Activated T-helper 2 cell treated with anti-CD3 and anti-CD28 coated beads, Interferon-gamma antibody, Interleukin-2, Interleukin-4, amounts not matched to agents 10 μg/mL and 5 μg/mL and 100 μg/mL, durations not matched to agents 14 hours and 24 hours and 36 hours (primary cell): ENCODE measurements at regions of chr3 and their contacts with region 1.

Region 1: DNA sequence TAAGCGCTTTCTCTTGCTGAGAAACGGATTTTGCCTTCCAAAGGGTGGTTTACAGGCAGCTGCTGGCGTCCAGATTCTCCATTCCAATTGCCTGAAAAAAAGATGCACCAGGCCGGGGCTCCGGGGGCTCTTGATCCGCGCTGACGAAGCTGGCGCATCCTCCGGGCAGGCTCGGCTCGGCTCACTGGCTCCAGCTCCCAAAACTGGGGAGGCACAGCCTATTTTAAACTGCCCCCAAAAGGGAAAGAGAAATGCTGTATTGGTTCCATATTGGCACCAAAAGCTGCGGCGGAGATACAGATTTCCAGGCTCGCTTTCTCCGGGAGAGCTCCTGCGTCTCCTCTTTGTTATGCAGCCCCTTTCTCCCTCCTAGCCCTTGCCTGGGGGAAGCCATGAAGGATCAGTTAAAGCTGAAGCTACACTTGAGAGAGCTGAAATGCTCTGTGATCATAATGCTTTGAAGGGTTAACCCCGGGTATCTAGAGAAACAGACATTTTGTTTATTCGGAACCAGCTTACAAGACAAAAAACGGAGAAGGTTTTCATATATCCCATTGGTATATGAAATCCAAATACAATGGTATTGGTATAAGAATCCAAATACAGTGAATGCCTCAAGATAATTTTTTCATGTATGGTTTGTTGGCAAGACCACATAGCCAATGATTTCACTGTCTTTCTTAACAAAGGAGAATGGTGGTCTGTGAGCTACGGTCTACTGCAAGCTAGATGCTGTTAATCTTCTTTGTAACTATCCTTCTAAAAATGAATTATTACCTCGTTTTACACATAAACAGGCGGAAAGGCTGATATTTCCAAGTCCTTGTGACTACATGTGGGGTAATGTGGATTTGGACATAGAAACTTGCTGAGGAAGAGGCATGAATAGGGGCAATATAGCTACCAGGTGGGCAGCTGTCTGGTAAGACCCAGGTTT is 693 bp downstream of the CD200 start:
- DNase-seq: peak; percentile 26
- H3K4me3 Mint-ChIP-seq: peak overlapping the region; percentile 90
- H3K27ac Mint-ChIP-seq: peak overlapping the region; percentile 85
- H3K4me1 Mint-ChIP-seq: peaks cover 48% of the 10 kb centered on the region
- H3K27me3 Mint-ChIP-seq: no peaks in the 10 kb centered on the region

Region 2: GRCh38 chr3:112357930-112358780 is 24.5 kb after region 1 on chr3:
- intact Hi-C with region 1: loop called (anchors 2 kb)
- DNase-seq: no peak
- H3K4me3 Mint-ChIP-seq: peak overlapping the region; percentile 70
- H3K27ac Mint-ChIP-seq: peak overlapping the region; percentile 91
- H3K4me1 Mint-ChIP-seq: peaks cover 38% of the 10 kb centered on the region
- H3K27me3 Mint-ChIP-seq: no peaks in the 10 kb centered on the region